Endothelial cell of umbilical vein (primary cell): ENCODE measurements at regions of chr12 and their contacts with region 1.

Region 1: GRCh38 chr12:132649206-132649934 is 30.8 kb downstream of the P2RX2 start:
- DNase-seq: no peak
- H3K4me3 ChIP-seq: no peak overlapping the region
- H3K27ac ChIP-seq: no peak overlapping the region
- H3K4me1 ChIP-seq: peaks cover 2% of the 10 kb centered on the region
- H3K27me3 ChIP-seq: no peaks in the 10 kb centered on the region
- CTCF ChIP-seq: no peak
- POLR2A ChIP-seq: no peak

Region 2: DNA sequence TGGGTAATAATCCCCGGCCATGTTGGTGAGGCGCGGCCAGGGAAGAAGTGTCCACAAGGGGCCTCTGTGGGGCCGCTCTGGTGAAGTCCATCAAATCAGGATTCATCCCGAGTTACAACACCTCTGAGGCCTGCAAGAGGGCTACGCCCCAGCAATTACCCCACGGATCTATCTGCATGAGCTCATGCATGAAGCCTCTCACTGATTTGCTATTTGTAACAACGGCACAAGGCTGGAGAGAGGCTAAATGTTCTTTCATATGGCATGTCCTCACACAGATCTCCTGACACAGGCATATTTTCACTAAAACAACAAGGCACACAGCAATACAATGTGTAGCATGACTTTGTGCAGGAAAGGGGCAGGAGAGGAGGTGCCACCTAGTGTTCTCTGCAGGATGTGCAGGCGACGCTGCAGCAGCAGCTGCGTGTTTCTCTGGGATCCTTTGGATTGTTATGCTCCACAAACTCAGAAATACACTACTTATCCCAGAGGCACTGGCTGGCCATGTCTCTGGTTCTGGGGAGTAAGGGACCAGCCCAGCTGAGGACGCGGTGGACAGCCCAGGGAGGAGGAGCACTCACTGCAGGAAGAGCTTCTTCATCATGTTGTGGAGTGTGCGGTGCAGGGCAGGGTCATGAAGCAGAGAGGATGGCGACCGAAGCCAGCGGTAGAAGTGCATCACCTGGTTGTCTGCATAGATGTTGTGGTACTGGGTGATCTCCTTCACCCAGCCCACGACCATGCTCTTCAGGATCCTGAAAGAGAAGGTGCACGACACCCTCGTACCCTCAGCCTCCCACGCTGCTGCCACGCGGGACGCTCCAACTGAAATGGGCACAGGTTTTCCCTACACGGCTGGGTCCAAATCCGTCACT is 10.6 kb before region 1 on chr12:
- CTCF ChIA-PET with region 1: interaction called, 22 read pairs
- POLR2A ChIA-PET with region 1: no interaction called
- dilution Hi-C with region 1: no loop called
- intact Hi-C with region 1: no loop called
- DNase-seq: peak; percentile 59
- H3K4me3 ChIP-seq: no peak overlapping the region
- H3K27ac ChIP-seq: no peak overlapping the region
- H3K4me1 ChIP-seq: no peaks in the 10 kb centered on the region
- H3K27me3 ChIP-seq: no peaks in the 10 kb centered on the region
- CTCF ChIP-seq: peak; percentile 78 to 83
- POLR2A ChIP-seq: no peak